ENCODE measurements at regions of chr7 and their contacts with region 1.

Region 1: GRCh38 chr7:111198255-111198654 is 107.3 kb downstream of the LRRN3 start:
- DNase-seq: peak; percentile 96
- ATAC-seq: peak; percentile 96
- H3K4me3 ChIP-seq: no peak overlapping the region
- H3K27ac ChIP-seq: peak overlapping the region; percentile 86
- H3K4me1 ChIP-seq: peaks cover 28% of the 10 kb centered on the region
- H3K27me3 ChIP-seq: no peaks in the 10 kb centered on the region
- CTCF ChIP-seq: no peak

Region 2: DNA sequence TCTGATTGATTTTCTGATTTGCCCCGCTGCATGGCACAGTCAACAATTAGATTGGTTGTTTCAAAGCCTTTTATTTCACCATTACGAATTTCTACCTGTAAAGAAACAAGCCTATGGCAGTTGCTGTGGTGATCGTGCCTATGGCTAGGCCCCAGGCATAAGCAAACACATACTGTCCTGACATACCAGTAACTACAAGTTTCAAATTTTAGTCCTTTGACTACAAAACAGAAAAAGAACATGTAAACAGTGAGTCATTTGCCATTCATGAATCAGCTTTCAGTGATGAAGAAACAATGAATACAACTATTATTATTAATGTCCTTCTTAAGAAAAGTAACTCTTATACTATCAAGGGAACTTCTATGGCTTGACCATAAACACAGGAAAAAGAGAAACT is 275.3 kb before region 1 on chr7:
- CTCF ChIA-PET with region 1: no interaction called
- POLR2A ChIA-PET with region 1: no interaction called
- intact Hi-C with region 1: loop called (anchors 5 kb)
- DNase-seq: peak; percentile 90
- ATAC-seq: peak; percentile 99
- H3K4me3 ChIP-seq: peak overlapping the region; percentile 32; the same call in 1 of the 2 replicates
- H3K27ac ChIP-seq: peak overlapping the region; percentile 75
- H3K4me1 ChIP-seq: peaks cover 22% of the 10 kb centered on the region
- H3K27me3 ChIP-seq: no peaks in the 10 kb centered on the region
- CTCF ChIP-seq: no peak

Region 3: DNA sequence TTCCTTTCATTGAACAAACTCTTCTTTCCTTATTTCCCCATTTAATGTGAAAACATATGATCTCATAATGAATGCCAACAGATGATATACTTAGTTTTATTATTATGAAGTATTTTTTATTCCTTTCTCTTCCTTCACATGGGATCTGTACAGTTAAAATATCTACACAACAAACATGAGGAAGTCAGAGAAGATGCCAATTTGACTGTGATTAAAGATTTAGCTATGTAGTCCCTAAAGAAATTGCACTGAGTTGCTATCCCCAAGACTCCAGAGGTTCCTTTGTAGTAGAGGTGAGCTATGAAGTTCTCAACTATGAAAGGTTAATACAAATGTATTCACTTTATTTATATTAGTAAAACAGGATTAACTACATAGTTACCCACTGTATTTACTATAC is 167.9 kb before region 1 on chr7:
- CTCF ChIA-PET with region 1: no interaction called
- POLR2A ChIA-PET with region 1: no interaction called
- intact Hi-C with region 1: no loop called
- DNase-seq: no peak
- ATAC-seq: no peak
- H3K4me3 ChIP-seq: no peak overlapping the region
- H3K27ac ChIP-seq: no peak overlapping the region
- H3K4me1 ChIP-seq: no peaks in the 10 kb centered on the region
- H3K27me3 ChIP-seq: no peaks in the 10 kb centered on the region
- CTCF ChIP-seq: no peak

Region 4: DNA sequence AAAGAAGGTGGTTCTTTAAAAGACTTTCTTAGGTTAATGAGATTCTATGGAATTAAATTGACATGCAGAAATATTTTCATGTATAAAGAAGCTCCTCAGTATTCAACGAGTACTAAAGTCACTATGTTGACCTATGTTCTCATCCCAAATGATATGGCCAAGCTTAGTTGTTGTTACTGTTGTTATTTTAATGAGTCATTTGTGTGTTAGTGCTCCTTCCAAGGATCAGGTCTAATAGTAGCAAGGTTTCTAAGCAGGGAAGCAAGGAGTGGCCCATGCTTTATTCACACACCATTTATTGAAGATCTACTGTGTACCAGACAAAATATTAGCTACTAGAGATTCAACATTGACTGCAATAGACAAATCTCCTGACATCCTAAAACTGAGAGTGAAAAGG is 65.4 kb before region 1 on chr7:
- CTCF ChIA-PET with region 1: no interaction called
- POLR2A ChIA-PET with region 1: no interaction called
- intact Hi-C with region 1: loop called (anchors 2 kb)
- DNase-seq: peak; percentile 59
- ATAC-seq: peak; percentile 99
- H3K4me3 ChIP-seq: no peak overlapping the region
- H3K27ac ChIP-seq: peak overlapping the region; percentile 32; the same call in 1 of the 2 replicates
- H3K4me1 ChIP-seq: peaks cover 17% of the 10 kb centered on the region
- H3K27me3 ChIP-seq: no peaks in the 10 kb centered on the region
- CTCF ChIP-seq: no peak

Region 5: DNA sequence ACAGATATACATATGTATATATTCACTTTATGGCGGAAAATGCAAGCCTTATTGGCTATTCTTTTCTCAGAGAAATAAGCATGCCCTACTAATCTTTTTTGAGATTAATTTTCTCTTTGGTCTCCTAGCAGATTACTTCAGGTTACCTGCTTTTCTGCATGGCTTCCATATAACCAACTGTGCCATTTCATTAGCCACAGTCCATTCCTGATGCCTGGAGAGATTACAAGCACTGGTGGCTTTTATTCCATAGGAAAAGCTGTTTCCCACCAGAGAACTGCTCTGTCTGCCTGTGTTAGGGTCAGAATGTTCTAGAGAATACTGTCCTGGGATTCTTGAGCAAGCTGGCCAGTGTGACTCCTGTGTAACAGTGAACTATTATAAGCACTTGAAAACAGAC is 47.5 kb before region 1 on chr7:
- CTCF ChIA-PET with region 1: no interaction called
- POLR2A ChIA-PET with region 1: no interaction called
- intact Hi-C with region 1: no loop called
- DNase-seq: no peak
- ATAC-seq: no peak
- H3K4me3 ChIP-seq: no peak overlapping the region
- H3K27ac ChIP-seq: no peak overlapping the region
- H3K4me1 ChIP-seq: no peaks in the 10 kb centered on the region
- H3K27me3 ChIP-seq: no peaks in the 10 kb centered on the region
- CTCF ChIP-seq: no peak

Measured in PC-3 (cell line).